Right ventricle myocardium superior (tissue), 1 donor: ENCODE measurements at regions of chr5 and their contacts with region 1.

Region 1: DNA sequence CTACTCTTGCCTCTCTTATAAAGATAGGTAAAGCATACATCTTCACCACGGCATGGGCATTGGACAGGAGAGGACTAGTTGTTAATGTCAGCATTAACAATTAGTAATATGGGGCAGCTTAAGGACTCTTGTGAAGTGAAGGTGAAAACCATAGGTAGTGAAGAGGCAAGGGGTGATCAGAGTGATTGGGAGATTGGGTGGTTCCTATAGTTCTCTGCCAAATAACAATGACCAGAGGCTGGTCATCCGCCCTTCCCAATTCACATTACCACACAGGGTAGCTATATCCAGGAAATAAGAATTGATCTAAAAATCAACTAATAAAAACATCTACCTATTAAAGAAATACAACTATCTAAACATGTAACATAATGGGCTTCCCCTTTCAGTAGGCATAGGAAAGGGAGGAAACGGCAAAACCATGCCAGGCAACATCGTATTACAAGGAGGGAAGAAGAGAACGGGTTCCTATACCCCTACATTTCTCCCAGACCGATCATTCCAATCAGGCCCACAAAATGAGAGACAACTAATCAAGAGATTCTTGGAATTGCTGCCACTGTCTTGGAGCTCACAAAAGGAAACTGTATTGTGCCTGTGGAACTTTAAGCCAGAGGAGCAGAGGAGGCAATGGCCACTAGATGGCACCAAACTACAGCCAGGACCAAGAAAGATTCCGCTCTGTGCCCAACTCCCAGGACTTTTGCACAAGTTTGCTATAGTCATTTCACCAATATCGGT is 121.6 kb downstream of the FBXL17 start:
- DNase-seq: peak; percentile 52
- ATAC-seq: peak; percentile 95

Region 2: GRCh38 chr5:108339232-108339631 is 78.9 kb after region 1 on chr5:
- intact Hi-C with region 1: no loop called
- DNase-seq: no peak
- ATAC-seq: no peak

Region 3: GRCh38 chr5:108356286-108356685 is 96.0 kb after region 1 on chr5:
- intact Hi-C with region 1: loop called (anchors 10 kb)
- DNase-seq: no peak
- ATAC-seq: peak; percentile 65

Region 4: GRCh38 chr5:108381954-108382783 is 121.9 kb after region 1 on chr5 and contains the start of gene FBXL17:
- intact Hi-C with region 1: no loop called
- DNase-seq: peak; percentile 97
- ATAC-seq: peak; percentile 91
- total RNA-seq, gene FBXL17: 44.0 TPM